Activated B cell treated with CpG ODN at 0.5 μM for 24 hours (primary cell): ENCODE measurements at regions of chr10 and their contacts with region 1.

Region 1: DNA sequence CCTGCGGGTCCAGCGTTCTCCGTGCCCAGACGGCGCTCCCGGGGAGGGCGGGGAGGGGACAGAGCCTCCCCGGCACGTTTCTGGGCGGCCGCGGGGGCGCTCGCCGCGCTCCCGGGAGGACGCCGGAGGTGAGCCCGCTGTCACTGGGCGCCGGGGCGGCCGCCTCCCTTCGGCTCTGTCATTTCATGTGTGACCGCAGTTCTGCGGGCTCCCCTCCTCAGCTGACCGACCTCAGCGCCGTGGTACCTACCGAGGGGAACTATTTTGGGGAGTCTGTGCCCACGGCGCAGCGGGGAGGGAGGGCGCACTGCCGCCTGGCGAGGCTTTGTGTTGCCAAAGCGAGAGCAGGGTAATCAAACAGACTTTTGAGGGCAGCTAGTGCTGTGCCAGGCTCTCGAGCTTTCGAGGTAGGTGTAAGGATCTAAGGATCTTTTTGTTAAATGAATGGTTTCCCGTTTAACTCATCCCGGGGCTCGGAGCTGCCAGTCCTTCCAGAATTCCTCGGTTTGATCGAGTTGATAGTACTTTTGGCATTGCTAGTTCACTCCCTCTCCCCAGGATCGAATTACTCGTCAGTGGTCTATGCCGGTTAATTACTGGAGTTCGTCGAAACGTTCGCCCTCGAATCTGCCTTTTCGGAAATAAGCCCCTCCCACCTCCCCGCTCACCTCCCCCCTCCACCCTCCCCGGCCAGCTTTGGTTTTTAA is 1.9 kb downstream of the ARID5B start:
- DNase-seq: peak; percentile 76
- ATAC-seq: peak; percentile 46
- H3K4me3 Mint-ChIP-seq: peak overlapping the region; percentile 97
- H3K27ac Mint-ChIP-seq: peak overlapping the region; percentile 98
- H3K4me1 Mint-ChIP-seq: peaks cover 51% of the 10 kb centered on the region
- H3K27me3 Mint-ChIP-seq: no peaks in the 10 kb centered on the region
- CTCF ChIP-seq: no peak

Region 2: DNA sequence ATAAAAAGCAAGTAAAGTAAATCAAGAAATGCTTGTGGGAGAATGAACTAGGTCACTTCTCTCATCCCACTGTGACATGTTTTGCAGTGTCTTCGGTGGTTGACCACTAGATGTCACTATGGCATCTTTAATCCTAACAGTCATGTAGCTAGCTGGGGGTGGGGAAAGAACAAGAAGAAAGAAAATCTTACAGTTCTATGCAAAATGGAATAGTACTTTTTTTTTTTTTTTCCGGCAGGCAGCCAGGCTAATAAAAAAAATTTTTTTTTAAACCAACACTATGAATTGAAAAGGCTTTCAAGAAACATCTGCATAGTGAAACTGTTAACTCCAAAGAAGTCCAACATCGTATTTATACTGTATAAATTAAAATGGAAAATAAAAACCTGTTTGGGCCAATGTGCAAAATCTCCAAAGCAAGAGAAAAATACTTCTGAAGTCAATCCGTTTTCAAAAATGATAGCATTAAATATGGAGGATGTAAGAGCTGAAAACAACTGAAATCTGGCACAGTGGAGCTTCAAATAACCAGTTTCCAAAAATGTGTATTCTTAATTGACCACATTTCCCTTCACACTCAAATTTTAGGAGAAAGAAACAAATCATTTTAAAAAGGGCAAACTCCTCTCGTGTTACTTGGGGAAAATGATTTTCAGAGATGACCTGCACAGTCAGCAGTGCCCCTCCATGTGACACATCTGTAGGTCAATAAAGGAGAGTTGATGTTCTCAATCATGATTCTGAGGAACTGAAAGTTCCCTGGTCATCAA is 1086.6 kb before region 1 on chr10:
- CTCF ChIA-PET with region 1: no interaction called
- POLR2A ChIA-PET with region 1: no interaction called
- intact Hi-C with region 1: loop called (anchors 5 kb)
- DNase-seq: no peak
- ATAC-seq: peak; percentile 79
- H3K4me3 Mint-ChIP-seq: no peak overlapping the region
- H3K27ac Mint-ChIP-seq: no peak overlapping the region
- H3K4me1 Mint-ChIP-seq: peaks cover 9% of the 10 kb centered on the region
- H3K27me3 Mint-ChIP-seq: no peaks in the 10 kb centered on the region
- CTCF ChIP-seq: peak; percentile 90

Region 3: DNA sequence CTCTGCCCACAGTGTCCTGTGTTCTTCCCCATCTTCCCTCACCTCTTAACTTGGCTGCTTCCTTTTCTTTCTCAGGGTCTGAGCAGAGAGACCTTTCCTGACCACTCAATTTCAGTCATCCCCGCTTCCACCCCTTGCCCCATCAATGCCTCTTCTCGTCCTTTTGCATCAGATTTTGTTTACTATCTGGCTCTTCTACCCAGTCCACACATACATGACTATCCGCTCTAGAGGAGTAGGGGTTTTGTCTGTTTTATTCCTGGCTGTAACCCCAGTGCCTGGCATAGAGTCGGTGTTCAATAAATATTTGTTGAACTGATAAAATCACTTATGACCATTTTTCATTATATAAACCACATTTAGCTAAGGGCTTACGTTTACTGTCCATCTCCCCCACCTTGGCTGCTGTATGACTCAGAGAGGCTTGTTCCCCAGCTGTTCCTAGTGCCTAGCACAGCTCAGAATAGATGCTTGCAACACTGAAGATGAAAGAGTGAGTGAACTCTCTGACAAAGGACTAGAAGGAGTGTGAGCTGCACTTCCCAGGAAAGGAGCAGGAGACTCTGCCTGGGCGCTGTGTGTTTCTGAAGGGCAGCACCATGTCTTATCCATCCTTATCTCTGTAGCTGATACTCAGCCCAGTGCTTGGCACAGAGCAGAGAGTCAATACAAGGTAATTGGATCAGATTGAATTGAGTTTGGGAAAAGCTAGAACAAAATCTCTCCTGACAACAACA is 20.0 kb after region 1 on chr10:
- CTCF ChIA-PET with region 1: interaction called, 3 read pairs
- POLR2A ChIA-PET with region 1: interaction called, 8 read pairs
- intact Hi-C with region 1: loop called (anchors 2 kb)
- DNase-seq: no peak
- ATAC-seq: no peak
- H3K4me3 Mint-ChIP-seq: no peak overlapping the region
- H3K27ac Mint-ChIP-seq: peak overlapping the region; percentile 15
- H3K4me1 Mint-ChIP-seq: peaks cover 57% of the 10 kb centered on the region
- H3K27me3 Mint-ChIP-seq: no peaks in the 10 kb centered on the region
- CTCF ChIP-seq: no peak

Region 4: GRCh38 chr10:61974601-61975390 is 71.4 kb after region 1 on chr10:
- CTCF ChIA-PET with region 1: no interaction called
- POLR2A ChIA-PET with region 1: interaction called, 47 read pairs
- intact Hi-C with region 1: no loop called
- DNase-seq: no peak
- ATAC-seq: no peak
- H3K4me3 Mint-ChIP-seq: peak overlapping the region; percentile 60
- H3K27ac Mint-ChIP-seq: peak overlapping the region; percentile 81
- H3K4me1 Mint-ChIP-seq: peaks cover 84% of the 10 kb centered on the region
- H3K27me3 Mint-ChIP-seq: no peaks in the 10 kb centered on the region
- CTCF ChIP-seq: no peak

Region 5: DNA sequence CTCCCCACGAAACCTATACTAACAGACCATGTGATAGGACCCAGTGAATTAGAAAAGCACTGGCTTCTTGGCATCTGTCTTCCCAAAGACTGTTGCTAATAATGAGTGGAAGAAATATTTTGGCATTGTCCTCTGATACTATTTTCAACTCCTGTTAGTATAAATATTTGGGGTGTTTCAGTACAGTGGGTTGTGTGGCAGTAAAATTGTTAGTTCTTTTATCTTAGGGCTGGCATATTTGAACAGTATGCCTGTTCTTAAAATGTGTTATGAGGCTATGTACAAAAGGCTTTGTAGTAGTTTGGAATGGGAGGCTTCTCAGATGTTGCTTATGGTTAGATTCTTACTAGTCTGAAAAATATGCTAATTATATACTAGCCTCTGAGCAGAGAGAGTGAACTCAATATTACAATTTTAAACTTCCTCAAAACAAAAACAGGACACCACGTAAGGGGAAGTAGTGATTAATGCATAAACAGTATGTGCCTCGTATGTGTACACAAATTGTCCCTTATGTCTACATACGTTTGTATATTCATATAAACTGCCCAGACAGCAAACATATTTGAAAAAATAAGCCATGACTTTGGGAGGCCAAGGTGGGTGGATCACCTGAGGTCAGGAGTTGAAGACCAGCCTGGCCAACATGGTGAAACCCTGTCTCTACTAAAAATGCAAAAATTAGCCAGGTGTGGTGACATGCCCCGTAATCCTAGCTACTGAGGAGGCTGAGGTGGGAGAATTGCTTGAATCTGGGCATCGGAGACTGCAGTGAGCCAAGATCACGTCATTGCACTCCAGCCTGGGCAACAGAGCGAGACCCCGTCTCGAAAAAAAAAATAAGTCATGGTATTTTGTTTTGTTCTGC is 113.5 kb after region 1 on chr10:
- CTCF ChIA-PET with region 1: interaction called, 24 read pairs
- POLR2A ChIA-PET with region 1: interaction called, 382 read pairs
- intact Hi-C with region 1: loop called (anchors 1 kb)
- DNase-seq: peak; percentile 40
- ATAC-seq: peak; percentile 65
- H3K4me3 Mint-ChIP-seq: peak overlapping the region; percentile 66
- H3K27ac Mint-ChIP-seq: peak overlapping the region; percentile 96
- H3K4me1 Mint-ChIP-seq: peaks cover 84% of the 10 kb centered on the region
- H3K27me3 Mint-ChIP-seq: no peaks in the 10 kb centered on the region
- CTCF ChIP-seq: no peak

Region 6: GRCh38 chr10:62082729-62083411 is 179.5 kb after region 1 on chr10:
- CTCF ChIA-PET with region 1: interaction called, 3 read pairs
- POLR2A ChIA-PET with region 1: interaction called, 58 read pairs
- intact Hi-C with region 1: loop called (anchors 1 kb)
- DNase-seq: no peak
- ATAC-seq: peak; percentile 48
- H3K4me3 Mint-ChIP-seq: peak overlapping the region; percentile 65
- H3K27ac Mint-ChIP-seq: peak overlapping the region; percentile 96
- H3K4me1 Mint-ChIP-seq: peaks cover 86% of the 10 kb centered on the region
- H3K27me3 Mint-ChIP-seq: no peaks in the 10 kb centered on the region
- CTCF ChIP-seq: no peak

Region 7: DNA sequence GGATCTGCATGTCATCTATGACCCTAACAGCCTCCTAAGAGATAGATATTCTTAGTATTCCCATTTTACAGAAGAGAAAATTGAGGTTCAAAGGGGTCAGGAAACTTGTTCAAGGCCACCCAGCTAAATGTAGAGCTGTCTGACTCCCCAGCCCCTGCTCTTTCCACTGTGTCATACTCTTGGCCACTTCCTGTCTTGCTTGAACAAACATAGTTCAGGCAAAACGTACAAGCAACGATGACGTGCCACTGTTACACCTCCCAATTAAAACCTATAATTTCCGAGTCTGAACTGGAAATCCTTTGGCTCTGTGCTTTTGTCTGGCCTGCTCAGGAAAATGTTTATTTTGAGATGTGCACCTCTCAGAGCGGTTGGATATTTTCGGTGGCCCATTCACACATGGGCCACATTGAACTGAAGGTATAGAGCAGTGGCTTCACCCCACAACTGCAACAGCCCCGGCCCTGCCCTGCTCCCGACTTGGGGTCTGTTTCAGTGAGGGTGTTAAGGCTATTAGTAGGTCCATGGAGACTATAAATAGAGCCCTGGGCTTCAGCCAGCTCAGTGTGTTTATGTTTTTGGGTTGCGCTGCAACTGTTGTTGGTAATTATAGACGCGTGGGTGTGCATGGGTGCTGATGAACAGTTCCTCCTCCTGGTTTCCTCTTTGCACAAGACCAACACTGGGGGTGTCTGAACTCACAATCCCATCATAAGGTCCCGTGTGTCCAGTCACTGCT is 728.9 kb after region 1 on chr10:
- CTCF ChIA-PET with region 1: no interaction called
- POLR2A ChIA-PET with region 1: no interaction called
- intact Hi-C with region 1: loop called (anchors 5 kb)
- DNase-seq: no peak
- ATAC-seq: peak; percentile 81
- H3K4me3 Mint-ChIP-seq: peak overlapping the region; percentile 83
- H3K27ac Mint-ChIP-seq: peak overlapping the region; percentile 98
- H3K4me1 Mint-ChIP-seq: peaks cover 58% of the 10 kb centered on the region
- H3K27me3 Mint-ChIP-seq: no peaks in the 10 kb centered on the region
- CTCF ChIP-seq: no peak